Activated CD4-positive, alpha-beta T cell treated with anti-CD3 and anti-CD28 coated beads, Interleukin-2, amount 10 ng/mL, durations not matched to agents 24 days and 14 days (primary cell): ENCODE measurements at regions of chr12 and their contacts with region 1.

Region 1: DNA sequence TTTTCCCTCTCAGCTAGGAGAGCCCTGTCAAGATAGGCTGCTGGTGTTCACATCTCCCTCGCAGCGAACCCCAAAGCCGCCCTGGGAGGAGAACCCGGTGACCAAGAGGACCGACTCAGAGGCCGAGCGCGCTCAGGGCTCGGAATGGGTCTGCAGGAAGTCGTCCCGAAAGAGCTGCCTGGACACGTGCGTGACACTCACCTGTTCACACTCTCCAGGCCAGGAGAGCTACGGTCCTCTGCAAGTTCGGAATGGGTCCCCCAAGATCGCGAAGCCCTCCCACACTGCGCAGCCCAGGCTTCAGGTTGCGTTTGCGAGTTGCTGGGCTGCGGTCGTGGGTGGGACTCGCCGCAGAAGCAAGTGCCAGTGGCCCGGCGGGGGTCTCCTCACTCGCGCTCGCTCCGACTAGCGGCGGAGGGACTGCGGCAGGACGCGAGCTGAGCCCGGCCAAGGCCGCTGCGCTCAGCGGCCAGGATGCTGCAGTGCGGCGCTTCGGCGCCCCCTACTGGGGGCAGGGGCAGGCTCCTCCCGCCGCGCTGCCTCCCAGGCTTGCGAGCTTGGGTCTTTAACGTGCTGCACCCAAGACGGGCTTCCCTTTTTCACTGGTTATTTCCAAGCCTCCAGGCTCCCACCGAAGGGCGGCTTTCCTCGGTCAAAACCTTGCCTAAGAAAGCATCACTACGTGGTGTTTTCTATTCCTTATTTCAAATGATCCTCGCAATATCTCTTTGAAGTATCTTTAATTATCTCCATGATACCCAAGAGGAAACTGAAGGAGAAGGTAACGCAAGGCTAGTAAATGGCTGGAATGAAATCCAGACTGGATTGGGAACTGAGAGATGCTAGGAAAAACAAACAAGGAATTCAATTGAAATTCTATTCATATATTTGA is at the start of gene RERG:
- DNase-seq: peak; percentile 94
- H3K4me3 Mint-ChIP-seq: peak within 1 kb of the TSS; percentile 69
- H3K27ac Mint-ChIP-seq: no peak within 1 kb of the TSS
- H3K4me1 Mint-ChIP-seq: peaks cover 7% of the 10 kb centered on the region
- H3K27me3 Mint-ChIP-seq: peaks cover 48% of the 10 kb centered on the region
- total RNA-seq, gene RERG: not detected in 2 replicates

Region 2: GRCh38 chr12:15151161-15152120 is 69.8 kb before region 1 on chr12:
- intact Hi-C with region 1: loop called (anchors 5 kb)
- DNase-seq: no peak
- H3K4me3 Mint-ChIP-seq: no peak overlapping the region
- H3K27ac Mint-ChIP-seq: no peak overlapping the region
- H3K4me1 Mint-ChIP-seq: no peaks in the 10 kb centered on the region
- H3K27me3 Mint-ChIP-seq: peaks cover 2% of the 10 kb centered on the region

Region 3: DNA sequence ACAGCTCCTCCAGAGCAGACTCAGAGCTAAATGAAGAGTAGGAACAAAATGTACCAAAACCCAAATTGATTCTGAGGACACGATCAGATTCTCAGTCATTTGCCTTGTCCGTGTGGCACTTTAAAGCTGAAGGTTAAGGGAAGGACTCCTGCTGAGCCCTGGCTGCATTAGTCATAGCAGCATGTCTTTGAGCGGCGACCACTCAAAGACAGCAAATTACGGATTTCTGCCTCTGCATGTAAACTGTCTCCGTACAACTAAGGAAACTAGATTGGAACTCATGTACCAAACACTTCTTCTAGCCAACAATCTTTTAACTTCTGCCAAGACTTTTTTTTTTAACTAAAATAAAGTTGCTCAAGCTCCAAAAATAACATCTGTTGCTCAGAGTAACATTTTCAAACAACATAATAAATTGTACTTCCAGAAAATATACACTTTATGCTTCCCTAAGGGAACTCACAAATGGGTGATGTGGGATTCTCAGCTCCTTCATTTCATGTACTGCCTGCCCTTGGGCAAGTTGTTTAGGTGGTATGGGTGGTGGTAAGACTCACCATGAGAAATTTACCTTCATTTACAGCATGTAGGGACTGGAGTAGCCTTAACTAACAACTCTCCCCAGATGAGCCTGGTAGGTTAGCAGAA is 56.1 kb before region 1 on chr12:
- intact Hi-C with region 1: no loop called
- DNase-seq: no peak
- H3K4me3 Mint-ChIP-seq: no peak overlapping the region
- H3K27ac Mint-ChIP-seq: no peak overlapping the region
- H3K4me1 Mint-ChIP-seq: no peaks in the 10 kb centered on the region
- H3K27me3 Mint-ChIP-seq: peaks cover 7% of the 10 kb centered on the region

Region 4: GRCh38 chr12:15268927-15269552 is 47.8 kb after region 1 on chr12:
- intact Hi-C with region 1: loop called (anchors 2 kb)
- DNase-seq: peak; percentile 75
- H3K4me3 Mint-ChIP-seq: no peak overlapping the region
- H3K27ac Mint-ChIP-seq: no peak overlapping the region
- H3K4me1 Mint-ChIP-seq: peaks cover 3% of the 10 kb centered on the region
- H3K27me3 Mint-ChIP-seq: no peaks in the 10 kb centered on the region